Caco-2 (cell line): ENCODE measurements at regions of chr2 and their contacts with region 1.

Region 1: DNA sequence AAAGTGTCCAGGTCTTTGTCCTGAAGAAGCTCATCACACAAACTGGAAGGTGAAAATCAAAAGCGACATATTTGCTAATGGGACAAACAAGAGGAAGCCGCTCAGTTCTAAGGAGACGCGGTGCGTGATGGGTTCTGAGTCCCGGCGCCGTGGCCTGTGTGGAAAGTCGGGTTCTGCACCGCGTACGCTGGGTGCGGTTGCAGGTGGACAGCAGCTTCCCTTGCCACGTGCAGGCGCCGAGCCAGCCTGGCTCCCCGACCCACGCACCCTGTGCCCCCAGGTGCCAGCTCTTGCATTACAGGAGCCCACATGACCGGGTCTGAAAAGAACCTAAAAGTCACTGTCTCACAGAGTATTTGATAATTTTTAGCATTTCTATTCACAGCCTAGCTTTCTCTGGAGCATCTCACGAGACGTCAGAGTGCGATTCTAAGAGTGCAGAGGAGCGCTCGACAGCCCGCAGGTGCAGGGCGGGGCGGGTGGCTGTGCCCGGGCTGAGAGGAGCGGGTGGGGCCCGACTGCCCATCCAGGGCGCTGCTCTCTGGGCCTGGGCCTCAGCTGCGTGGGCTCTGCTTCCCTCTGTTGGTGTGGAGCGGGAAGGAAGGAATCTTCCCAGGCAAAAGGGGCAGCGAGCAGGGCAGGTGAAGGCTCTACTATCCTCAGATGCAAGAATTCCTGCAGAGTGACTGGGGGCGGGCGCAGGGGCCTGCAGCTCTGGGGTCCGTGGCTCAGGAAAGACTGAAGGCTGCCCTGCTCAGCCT is 39.4 kb downstream of the MYT1L start:
- DNase-seq: peak in 1 of 2 experiments; percentile 26
- H3K4me3 ChIP-seq: no peak overlapping the region
- H3K4me3 Mint-ChIP-seq: no peak overlapping the region
- H3K27ac Mint-ChIP-seq: no peak overlapping the region
- H3K4me1 ChIP-seq: no peaks in the 10 kb centered on the region
- H3K4me1 Mint-ChIP-seq: no peaks in the 10 kb centered on the region
- H3K27me3 ChIP-seq: no peaks in the 10 kb centered on the region
- H3K27me3 Mint-ChIP-seq: peaks cover 20% of the 10 kb centered on the region
- CTCF ChIP-seq: peak; percentile 34 to 62

Region 2: DNA sequence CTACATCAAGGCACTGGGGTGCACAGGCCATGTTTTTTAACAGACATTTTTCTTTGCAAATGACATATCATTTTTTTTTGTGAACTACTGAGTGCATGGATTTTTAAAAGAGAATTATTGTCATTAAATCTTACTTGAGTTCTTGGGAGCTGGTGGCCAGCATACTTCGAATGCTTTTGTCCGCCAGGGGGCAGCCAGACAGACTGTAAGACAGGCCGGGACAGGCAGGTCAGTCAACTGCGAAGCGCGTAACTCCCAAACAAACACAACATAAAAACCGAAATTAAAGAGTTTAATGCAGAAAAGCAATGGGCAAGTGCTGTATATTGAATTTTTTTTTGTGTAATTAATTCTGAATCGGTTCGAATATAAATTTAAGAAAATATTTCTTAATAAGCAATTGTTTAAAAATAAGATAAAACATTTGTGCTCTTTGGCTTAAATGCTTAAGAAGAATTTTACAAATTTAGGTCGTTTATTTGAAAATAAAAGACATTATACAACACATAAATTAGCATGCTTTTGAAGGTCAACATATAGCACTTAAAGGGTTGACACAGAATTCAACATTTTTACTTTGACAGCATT is 405.2 kb before region 1 on chr2:
- CTCF ChIA-PET with region 1: no interaction called
- POLR2A ChIA-PET with region 1: no interaction called
- intact Hi-C with region 1: loop called (anchors 2 kb)
- DNase-seq: peak; percentile 57 to 69
- H3K4me3 ChIP-seq: no peak overlapping the region
- H3K4me3 Mint-ChIP-seq: no peak overlapping the region
- H3K27ac Mint-ChIP-seq: no peak overlapping the region
- H3K4me1 ChIP-seq: no peaks in the 10 kb centered on the region
- H3K4me1 Mint-ChIP-seq: no peaks in the 10 kb centered on the region
- H3K27me3 ChIP-seq: no peaks in the 10 kb centered on the region
- H3K27me3 Mint-ChIP-seq: peaks cover 16% of the 10 kb centered on the region
- CTCF ChIP-seq: peak; percentile 71 to 81